Aorta (tissue), 5 donors: ENCODE measurements at regions of chr5 and their contacts with region 1.

Region 1: DNA sequence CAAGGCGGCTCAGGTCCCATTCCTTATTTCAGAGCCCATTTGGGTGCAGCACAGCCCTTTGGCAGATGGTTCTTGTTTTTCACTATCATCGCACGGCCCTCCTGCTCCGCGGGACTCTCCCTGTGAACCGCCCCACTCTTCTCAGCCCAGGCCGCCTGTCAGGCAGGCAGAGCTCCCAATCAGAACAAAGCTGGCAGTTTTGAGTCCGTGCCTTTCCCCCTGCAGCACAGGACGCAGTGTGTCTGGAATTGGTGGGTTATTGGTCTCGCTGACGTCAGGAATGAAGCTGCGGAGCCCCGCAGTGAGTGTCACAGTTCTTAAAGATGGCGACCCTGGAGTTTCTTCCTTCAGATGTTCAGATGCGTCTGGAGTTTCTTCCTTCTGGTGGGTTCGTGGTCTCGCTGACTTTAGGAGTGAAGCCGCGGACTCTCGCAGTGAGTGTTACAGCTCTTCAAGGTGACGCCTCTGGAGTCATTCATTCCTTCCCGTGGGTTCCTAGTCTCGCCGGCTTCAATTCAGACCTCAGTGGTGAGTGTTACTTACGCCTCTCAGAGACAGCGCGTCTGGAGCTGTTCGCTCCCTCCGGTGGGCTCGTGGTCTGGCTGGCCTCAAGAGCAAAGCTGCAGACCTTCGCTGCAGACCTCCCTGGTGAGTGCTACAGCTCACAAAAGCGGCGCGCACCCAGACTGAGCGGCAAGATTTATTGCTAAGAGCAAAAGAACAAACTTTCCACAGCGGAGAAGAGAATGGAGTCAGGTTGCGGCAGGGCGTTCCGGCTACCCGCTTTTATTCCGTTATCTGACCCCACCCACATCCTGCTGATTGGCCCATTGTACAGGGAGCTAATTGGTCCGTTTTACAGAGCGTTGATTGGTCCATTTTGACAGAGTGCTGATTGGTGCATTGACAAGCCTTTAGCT is 7.5 kb downstream of the ZDHHC11B start:
- DNase-seq: peak in 1 of 2 donors; percentile 84
- ATAC-seq: no peak
- H3K4me3 ChIP-seq: no peak overlapping the region
- H3K27ac ChIP-seq: no peak overlapping the region
- H3K4me1 ChIP-seq: no peaks in the 10 kb centered on the region
- H3K27me3 ChIP-seq: no peaks in the 10 kb centered on the region

Region 2: GRCh38 chr5:683551-684481 is 93.2 kb before region 1 on chr5:
- intact Hi-C with region 1: loop called (anchors 5 kb)
- DNase-seq: peak; percentile 40 to 80
- ATAC-seq: no peak
- H3K4me3 ChIP-seq: no peak overlapping the region
- H3K27ac ChIP-seq: no peak overlapping the region
- H3K4me1 ChIP-seq: no peaks in the 10 kb centered on the region
- H3K27me3 ChIP-seq: no peaks in the 10 kb centered on the region

Region 3: DNA sequence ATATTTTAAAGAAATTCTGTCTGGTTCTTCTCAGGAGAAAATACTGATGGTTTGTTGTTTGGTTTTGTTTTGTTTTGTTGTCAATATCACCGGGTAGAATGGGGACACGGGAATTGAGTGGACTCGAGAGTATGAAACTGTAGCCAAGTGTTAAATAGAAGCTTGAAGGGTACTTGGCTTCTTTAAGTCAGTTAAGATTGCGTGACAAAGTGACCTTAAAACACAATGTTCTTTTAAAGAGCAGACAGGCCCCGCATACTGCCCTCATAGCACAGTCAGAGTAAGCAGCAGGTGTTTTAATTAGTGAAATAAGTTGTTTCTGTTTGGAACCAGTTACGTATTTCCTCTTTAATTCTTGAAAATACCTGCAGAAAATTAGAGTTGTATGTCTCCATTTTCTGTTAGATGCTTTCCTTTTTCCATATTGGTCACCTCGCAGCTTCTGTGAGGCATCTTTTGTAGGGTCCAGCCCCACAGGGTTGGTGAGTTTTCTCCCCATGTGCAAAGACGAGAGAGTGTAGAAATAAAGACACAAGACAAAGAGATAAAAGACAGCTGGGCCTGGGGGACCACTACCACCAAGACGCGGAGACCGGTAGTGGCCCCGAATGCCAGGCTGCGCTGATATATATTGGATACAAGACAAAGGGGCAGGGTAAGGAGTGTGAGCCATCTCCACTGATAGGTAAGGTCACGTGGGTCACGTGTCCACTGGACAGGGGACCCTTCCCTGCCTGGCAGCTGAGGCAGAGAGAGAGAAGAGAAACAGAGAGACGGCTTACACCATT is 125.3 kb after region 1 on chr5:
- intact Hi-C with region 1: no loop called
- DNase-seq: peak in 1 of 2 donors; percentile 25
- ATAC-seq: no peak
- H3K4me3 ChIP-seq: no peak overlapping the region
- H3K27ac ChIP-seq: no peak overlapping the region
- H3K4me1 ChIP-seq: no peaks in the 10 kb centered on the region
- H3K27me3 ChIP-seq: no peaks in the 10 kb centered on the region

Region 4: GRCh38 chr5:1983919-1984695 is 1207.1 kb after region 1 on chr5:
- intact Hi-C with region 1: no loop called
- DNase-seq: no peak
- ATAC-seq: no peak
- H3K4me3 ChIP-seq: no peak overlapping the region
- H3K27ac ChIP-seq: no peak overlapping the region
- H3K4me1 ChIP-seq: no peaks in the 10 kb centered on the region
- H3K27me3 ChIP-seq: no peaks in the 10 kb centered on the region